Ascending aorta (tissue), 2 donors: ENCODE measurements at regions of chrX and their contacts with region 1.

Region 1: GRCh38 chrX:48801280-48802088 is at the start of gene HDAC6:
- DNase-seq: peak; percentile 93 to 98
- H3K4me3 ChIP-seq: peak within 1 kb of the TSS; percentile 68 to 73
- H3K27ac ChIP-seq: peak within 1 kb of the TSS; percentile 96 to 97
- H3K4me1 ChIP-seq: no peaks in the 10 kb centered on the region
- H3K27me3 ChIP-seq: no peaks in the 10 kb centered on the region
- CTCF ChIP-seq: no peak
- total RNA-seq, gene HDAC6: 157 TPM

Region 2: DNA sequence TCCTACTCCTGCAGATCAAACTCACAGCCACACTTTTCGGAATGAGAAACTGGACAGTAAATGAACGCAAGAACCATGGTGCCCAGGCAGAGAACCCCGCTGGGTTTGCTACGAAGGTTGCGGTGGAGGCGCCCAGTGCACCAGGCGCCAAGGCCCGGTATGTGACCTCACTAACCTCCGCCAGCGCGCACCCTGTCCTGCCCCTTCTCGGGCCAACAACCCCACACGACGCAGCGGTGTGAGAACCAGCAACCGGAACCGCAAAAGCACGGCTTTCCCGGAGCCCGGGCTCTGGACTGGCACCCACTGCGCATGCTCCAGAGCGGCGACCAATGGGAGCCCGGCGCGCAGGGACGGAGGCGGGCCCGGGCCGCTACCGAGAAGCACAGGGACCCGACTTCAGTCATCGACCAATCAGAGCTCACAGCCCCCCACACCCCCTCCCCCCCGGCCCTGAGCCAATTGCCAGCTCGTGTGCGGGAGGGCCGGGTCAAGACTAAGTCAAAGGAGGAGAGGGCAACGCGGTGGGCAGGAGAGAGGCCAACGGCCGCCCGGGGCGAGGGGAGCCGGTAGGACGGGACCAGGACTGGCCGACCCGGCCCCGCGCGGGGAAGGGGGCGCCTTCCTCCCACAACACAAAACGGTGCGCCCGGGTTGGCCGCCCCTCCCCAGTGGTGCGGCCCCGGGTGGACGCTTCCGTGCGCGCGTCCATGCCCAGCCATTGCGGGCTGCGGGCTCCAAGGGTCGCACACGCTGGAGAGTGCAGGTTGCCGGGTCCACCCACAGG is 125.2 kb before region 1 on chrX:
- intact Hi-C with region 1: loop called (anchors 5 kb)
- DNase-seq: peak; percentile 61 to 91
- H3K4me3 ChIP-seq: peak overlapping the region; percentile 65 to 79
- H3K27ac ChIP-seq: peak overlapping the region; percentile 74 to 76
- H3K4me1 ChIP-seq: peaks cover 0 to 4% of the 10 kb centered on the region in 2 donors
- H3K27me3 ChIP-seq: no peaks in the 10 kb centered on the region
- CTCF ChIP-seq: no peak

Region 3: GRCh38 chrX:48737213-48737938 is 64.1 kb before region 1 on chrX:
- intact Hi-C with region 1: loop called (anchors 1 kb)
- DNase-seq: peak; percentile 67 to 94
- H3K4me3 ChIP-seq: peak overlapping the region; percentile 56 to 67
- H3K27ac ChIP-seq: peak overlapping the region; percentile 84 to 85
- H3K4me1 ChIP-seq: no peaks in the 10 kb centered on the region
- H3K27me3 ChIP-seq: no peaks in the 10 kb centered on the region
- CTCF ChIP-seq: no peak

Region 4: GRCh38 chrX:48897621-48898306 is 96.3 kb after region 1 on chrX and contains the starts of genes PQBP1 and TIMM17B:
- intact Hi-C with region 1: loop called (anchors 1 kb)
- DNase-seq: peak; percentile 72 to 93
- H3K4me3 ChIP-seq: peak within 1 kb of the TSS; percentile 60 to 69
- H3K27ac ChIP-seq: peak within 1 kb of the TSS; percentile 94 to 97
- H3K4me1 ChIP-seq: peaks cover 3 to 9% of the 10 kb centered on the region in 2 donors
- H3K27me3 ChIP-seq: no peaks in the 10 kb centered on the region
- CTCF ChIP-seq: no peak
- total RNA-seq, gene PQBP1: 14.8 TPM
- total RNA-seq, gene TIMM17B: 15.3 TPM

Region 5: DNA sequence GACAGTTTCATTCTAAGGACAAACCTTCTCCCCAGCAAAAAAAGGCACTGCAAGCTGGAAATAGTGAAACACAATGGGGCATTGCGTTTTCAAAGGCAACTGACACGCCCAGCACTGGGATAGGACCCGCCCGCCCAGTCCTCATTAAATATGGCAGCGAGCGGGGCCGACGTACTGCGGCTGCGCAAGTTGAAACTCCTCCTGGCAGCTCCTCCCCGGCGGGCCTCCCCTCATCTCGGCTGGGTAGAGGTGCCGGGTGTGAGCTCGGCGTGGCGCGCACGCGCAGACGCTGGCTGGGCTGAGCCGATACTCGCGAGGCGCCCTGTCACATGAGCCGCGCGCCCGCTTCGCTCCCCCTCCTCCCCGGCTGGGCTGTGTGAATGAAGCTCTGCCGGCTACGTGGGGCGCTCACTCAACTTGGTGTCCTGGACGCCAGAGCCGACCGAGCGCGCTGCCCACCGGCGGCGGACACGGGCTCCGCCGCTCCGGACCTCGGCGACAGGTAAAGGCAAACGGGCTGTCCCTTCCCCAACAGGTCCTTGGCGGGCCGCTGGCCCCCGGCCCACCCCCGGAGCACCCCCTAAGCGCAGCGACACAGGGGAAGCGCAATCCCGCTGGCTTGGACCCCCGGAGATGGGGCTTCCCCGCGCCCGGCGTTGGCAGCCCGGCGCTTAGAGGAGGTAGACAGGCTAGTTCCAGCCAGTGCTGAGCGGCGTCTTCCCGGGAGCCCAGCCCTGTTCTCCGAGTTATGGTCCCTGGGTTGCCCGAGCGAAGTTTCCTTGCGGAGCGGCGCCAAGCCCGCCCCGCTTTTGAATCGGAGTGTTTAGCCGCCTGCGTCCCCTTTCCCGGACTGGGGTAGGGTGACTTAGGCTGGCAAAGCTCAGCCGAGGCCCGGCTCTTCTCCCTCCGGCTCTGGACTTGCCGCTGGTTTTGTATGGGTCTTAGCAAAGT is 1121.1 kb after region 1 on chrX and contains the start of gene CLCN5:
- intact Hi-C with region 1: loop called (anchors 5 kb)
- DNase-seq: peak; percentile 86 to 98
- H3K4me3 ChIP-seq: peak within 1 kb of the TSS; percentile 59 to 89
- H3K27ac ChIP-seq: peak within 1 kb of the TSS; percentile 58 to 86
- H3K4me1 ChIP-seq: no peaks in the 10 kb centered on the region
- H3K27me3 ChIP-seq: no peaks in the 10 kb centered on the region
- CTCF ChIP-seq: no peak
- total RNA-seq, gene CLCN5: 2.0 TPM